Activated CD4-positive, alpha-beta T cell treated with anti-CD3 and anti-CD28 coated beads for 36 hours (primary cell): ENCODE measurements at regions of chr4 and their contacts with region 1.

Region 1: DNA sequence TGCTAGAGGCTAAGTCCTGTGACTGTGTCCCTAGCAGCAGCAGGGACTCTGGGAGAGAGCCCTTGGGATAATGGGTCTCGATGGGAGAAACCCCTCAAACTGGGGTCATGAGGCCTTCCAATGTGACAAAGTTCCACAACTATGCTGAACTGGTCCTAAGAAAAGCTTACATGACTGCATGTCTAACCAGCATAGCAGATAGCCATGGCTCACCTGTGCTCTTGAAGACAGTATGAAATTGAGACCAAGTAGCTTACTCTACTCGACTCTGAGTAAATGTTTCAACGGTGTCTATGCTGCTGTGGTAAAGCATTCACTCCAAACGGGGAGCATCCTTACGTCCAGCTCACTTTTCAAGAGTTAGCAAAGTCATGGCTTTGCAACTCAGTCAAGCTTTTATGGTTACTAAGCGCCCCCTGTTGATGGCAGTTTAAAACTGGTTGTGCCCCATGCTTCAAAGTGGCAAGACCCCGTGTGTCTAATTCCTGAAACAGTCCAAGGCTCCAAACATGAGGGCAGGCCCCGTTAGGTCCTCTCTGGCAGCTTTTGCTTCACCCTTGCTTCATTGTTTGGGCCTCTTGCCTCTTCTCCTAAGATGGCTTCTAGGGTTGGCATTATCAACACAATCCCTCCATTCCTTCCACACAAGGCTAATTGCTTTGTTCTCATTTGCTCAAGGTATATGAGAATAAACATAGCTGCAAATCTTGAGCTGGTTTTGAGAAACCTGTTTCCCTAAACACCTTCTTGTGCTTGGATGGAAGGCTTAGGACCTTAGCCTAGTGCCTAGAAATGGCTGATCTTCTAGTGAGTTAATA is 46.6 kb downstream of the CCNG2 start:
- DNase-seq: peak; percentile 77
- ATAC-seq: peak; percentile 73
- H3K4me3 Mint-ChIP-seq: no peak overlapping the region
- H3K27ac Mint-ChIP-seq: no peak overlapping the region
- H3K4me1 Mint-ChIP-seq: peaks cover 3% of the 10 kb centered on the region
- H3K27me3 Mint-ChIP-seq: peaks cover 2% of the 10 kb centered on the region

Region 2: GRCh38 chr4:76515975-76516843 is 687.4 kb before region 1 on chr4:
- CTCF ChIA-PET with region 1: interaction called, 3 read pairs
- POLR2A ChIA-PET with region 1: no interaction called
- intact Hi-C with region 1: loop called (anchors 1 to 5 kb)
- DNase-seq: no peak
- ATAC-seq: no peak
- H3K4me3 Mint-ChIP-seq: no peak overlapping the region
- H3K27ac Mint-ChIP-seq: no peak overlapping the region
- H3K4me1 Mint-ChIP-seq: no peaks in the 10 kb centered on the region
- H3K27me3 Mint-ChIP-seq: no peaks in the 10 kb centered on the region

Region 3: DNA sequence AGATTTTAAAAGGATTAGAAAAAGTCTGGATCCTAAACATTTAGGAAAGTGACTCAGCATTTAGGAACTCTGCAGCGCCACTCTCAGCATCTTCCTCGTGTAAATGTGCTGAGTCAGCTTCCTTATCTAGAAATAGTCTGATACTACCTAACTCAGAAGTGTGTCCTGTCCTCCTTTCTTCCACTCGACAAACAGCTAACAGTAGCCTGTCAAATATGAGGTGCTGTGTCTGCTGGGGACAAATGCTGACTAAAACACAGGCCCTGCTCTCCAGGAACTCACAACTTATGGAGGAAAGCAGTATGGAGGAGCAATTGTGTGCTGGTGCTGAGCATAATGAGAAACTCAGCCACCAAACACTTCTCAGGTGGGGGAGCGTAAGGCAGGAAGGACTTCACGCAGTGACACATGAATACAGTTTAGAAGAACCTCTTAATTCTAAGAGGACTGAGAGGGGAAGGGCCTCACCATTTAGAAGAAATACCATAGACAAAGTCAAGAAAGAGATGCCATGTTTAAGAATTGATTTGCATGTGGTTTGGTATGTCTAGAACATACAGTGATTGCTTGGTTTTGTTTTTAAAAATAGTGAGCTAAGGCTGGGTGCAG is 431.0 kb before region 1 on chr4:
- CTCF ChIA-PET with region 1: no interaction called
- POLR2A ChIA-PET with region 1: no interaction called
- intact Hi-C with region 1: no loop called
- DNase-seq: no peak
- ATAC-seq: no peak
- H3K4me3 Mint-ChIP-seq: no peak overlapping the region
- H3K27ac Mint-ChIP-seq: no peak overlapping the region
- H3K4me1 Mint-ChIP-seq: no peaks in the 10 kb centered on the region
- H3K27me3 Mint-ChIP-seq: peaks cover 2% of the 10 kb centered on the region

Region 4: DNA sequence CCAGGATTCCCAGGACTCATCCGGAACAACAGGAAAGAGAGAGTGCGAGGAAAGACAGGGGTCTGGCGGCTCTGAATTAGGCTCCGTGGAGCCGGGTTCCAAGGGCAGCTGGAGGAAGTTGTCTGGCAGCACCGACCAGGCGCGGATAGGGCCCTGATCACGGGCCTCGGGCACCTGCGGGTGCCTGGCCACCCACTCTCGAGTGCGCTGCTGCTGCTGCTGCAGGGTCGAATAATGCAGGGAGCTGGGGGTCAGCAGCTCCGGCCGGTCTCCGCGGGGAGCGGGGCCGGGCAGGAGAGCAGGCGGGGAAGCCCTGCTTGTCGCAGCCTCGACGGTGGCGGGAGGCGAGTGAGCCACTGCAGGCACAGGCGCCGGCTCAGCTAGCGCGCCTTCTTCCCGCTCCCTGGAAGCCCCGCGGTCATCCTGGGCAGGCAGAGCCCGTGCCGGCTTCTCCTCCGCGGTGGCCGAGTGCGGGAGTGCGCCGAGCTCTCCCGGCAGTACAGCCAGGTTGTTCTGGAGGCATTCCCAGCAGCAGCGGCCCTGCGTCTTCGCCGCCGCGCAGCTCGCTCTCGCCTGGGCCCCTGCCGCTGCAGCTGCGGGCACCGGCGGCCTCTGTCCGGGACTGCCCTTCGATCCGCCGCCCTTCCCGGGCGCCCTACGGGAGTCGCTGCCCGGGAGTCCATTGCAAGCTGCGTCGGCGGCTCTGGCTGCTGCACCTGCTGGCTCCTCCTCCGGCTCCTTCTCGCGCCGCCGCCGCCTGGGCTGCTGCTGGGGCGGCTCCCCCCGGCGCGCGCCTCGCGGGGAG is 306.7 kb before region 1 on chr4:
- CTCF ChIA-PET with region 1: no interaction called
- POLR2A ChIA-PET with region 1: no interaction called
- intact Hi-C with region 1: loop called in 1 of 2 experiments (anchors 5 kb)
- DNase-seq: peak; percentile 51
- ATAC-seq: peak; percentile 47
- H3K4me3 Mint-ChIP-seq: no peak overlapping the region
- H3K27ac Mint-ChIP-seq: no peak overlapping the region
- H3K4me1 Mint-ChIP-seq: peaks cover 9% of the 10 kb centered on the region
- H3K27me3 Mint-ChIP-seq: peaks cover 45% of the 10 kb centered on the region

Region 5: DNA sequence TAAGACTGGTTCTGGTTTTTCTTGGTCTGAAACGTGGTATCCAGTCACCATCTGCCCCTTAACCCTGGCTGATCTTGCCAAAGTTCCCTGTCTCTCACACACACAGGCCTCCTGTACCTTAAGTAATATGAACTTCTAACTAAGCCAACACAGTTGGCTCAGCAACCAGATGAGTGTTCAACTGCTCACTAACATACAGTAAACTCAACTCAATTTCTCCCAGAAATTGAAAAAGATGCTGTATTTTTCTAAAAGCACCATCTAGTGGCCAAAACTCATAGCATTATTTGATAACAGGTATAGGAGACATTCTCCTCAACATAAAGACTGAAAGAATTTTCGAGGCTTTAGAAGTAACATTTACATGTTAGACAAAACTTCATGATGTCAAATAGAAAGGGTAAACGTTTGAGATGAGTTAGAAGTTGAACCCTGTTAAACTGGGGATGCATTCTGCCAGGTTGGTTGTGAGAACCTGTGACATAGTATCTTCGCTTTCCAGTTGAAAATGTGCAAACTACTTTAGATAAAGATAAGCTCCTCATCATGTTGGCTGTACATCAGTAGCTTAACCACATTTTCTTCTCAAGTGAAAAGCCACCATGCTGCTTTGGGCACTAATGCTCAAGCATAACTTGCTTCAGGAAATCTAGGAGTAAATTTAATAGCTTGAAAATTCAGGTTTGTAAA is 159.0 kb before region 1 on chr4:
- CTCF ChIA-PET with region 1: interaction called, 52 read pairs
- POLR2A ChIA-PET with region 1: no interaction called
- intact Hi-C with region 1: loop called in 1 of 2 experiments (anchors 1 kb)
- DNase-seq: no peak
- ATAC-seq: peak; percentile 68
- H3K4me3 Mint-ChIP-seq: no peak overlapping the region
- H3K27ac Mint-ChIP-seq: no peak overlapping the region
- H3K4me1 Mint-ChIP-seq: peaks cover 11% of the 10 kb centered on the region
- H3K27me3 Mint-ChIP-seq: no peaks in the 10 kb centered on the region

Region 6: DNA sequence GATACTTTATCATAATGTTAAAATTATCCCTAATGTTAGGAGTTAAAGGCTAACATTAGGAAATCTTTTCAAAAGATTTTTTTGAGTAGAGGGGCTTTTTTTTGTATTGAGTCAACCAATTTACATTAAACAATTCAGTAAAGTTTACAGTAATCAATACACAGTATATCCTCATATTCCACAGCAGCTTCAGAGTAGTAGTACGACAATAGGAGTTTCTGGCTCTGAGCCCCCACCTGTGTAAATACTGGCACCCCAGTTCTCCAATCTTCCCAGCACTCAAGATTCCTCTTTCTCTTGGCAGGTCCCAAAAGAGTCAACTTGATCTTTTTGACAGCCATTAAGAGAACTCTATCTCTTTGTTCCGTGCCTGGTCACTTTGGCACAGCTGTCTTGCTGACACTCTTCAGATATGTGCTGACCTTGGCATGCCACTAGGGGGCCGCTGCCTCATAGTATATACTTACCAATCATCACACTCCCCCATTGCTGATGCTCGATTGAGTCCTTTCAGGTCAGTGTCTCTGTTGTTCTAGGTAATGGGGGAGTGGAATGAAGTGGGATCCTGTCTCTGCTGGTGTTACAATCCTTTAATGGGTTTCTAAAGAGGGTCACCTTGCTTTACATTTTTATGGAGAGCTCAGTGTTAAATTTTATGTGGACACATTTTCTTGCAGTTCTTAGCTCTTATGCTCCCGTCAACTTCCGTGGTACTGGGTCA is 108.3 kb before region 1 on chr4:
- CTCF ChIA-PET with region 1: interaction called, 45 read pairs
- POLR2A ChIA-PET with region 1: no interaction called
- intact Hi-C with region 1: loop called (anchors 1 kb)
- DNase-seq: peak; percentile 76
- ATAC-seq: peak; percentile 99
- H3K4me3 Mint-ChIP-seq: no peak overlapping the region
- H3K27ac Mint-ChIP-seq: no peak overlapping the region
- H3K4me1 Mint-ChIP-seq: peaks cover 8% of the 10 kb centered on the region
- H3K27me3 Mint-ChIP-seq: no peaks in the 10 kb centered on the region

Region 7: DNA sequence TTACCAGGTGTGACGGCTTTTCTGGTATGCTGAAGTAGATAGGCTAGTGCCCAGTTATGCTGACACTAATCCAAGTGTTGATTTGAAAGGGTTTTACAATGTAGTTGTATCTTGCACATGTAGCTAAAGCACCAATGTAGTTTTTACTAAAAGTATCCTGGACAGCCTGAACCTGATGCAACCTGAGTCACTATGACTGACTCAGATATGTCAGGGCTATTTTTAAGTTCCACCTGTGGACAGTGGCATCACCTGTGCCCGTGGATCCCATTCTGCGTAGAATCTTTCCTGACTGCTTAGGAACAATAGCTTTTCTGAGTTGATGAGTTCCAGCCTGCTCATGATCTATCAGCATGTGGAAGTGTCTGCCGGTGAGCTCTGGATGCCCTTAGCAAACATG is 11.5 kb after region 1 on chr4:
- CTCF ChIA-PET with region 1: interaction called, 32 read pairs
- POLR2A ChIA-PET with region 1: no interaction called
- intact Hi-C with region 1: no loop called
- DNase-seq: no peak
- ATAC-seq: no peak
- H3K4me3 Mint-ChIP-seq: no peak overlapping the region
- H3K27ac Mint-ChIP-seq: no peak overlapping the region
- H3K4me1 Mint-ChIP-seq: no peaks in the 10 kb centered on the region
- H3K27me3 Mint-ChIP-seq: no peaks in the 10 kb centered on the region